ENCODE measurements at regions of chr19 and their contacts with region 1.

Region 1: DNA sequence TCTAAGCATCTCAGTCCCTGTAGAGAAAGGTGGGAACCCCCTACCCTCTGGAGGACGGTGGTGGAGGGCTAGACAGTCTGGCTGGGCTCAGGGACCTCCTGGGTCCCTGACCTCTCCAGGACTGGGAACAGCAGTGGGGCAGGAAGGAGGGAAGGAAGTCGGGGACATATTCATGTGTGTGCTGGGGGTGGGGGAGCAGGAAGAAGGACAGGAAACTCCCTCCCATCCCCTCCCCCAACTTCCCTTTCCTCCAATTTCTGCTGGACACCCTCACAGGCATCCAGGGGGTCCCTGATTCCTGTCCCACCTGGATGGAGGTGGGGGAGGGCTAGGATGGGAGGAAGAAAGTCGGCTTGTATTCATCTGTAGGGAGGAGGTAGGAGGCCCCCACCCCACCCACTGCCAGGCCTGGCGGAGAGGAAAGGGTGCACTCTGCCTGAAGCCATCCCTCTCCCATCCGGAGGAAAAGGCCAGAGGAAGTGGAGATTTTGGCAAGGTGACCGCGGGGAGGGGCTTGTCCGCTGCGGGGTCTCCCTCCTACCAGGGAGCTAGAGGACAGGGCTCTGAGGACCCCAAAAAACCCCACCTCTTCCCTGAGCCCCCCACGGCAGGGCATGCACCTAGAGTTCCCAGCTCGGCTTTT is 2.3 kb downstream of the NOVA2 start:
- DNase-seq: peak in 4 of 5 donors; percentile 29 to 66 (median 55)
- ATAC-seq: peak in 3 of 4 donors; percentile 49 to 66 (median 53)
- H3K4me3 ChIP-seq: peak overlapping the region in 11 of 12 donors; percentile 43 to 68 (median 58)
- H3K27ac ChIP-seq: peak overlapping the region in 11 of 12 donors; percentile 56 to 92 (median 85)
- H3K4me1 ChIP-seq: peaks cover 0 to 28% (median 6%) of the 10 kb centered on the region in 12 donors
- H3K27me3 ChIP-seq: peaks cover 8 to 57% (median 40%) of the 10 kb centered on the region in 9 donors
- CTCF ChIP-seq: no peak
- POLR2A ChIP-seq: no peak

Region 2: DNA sequence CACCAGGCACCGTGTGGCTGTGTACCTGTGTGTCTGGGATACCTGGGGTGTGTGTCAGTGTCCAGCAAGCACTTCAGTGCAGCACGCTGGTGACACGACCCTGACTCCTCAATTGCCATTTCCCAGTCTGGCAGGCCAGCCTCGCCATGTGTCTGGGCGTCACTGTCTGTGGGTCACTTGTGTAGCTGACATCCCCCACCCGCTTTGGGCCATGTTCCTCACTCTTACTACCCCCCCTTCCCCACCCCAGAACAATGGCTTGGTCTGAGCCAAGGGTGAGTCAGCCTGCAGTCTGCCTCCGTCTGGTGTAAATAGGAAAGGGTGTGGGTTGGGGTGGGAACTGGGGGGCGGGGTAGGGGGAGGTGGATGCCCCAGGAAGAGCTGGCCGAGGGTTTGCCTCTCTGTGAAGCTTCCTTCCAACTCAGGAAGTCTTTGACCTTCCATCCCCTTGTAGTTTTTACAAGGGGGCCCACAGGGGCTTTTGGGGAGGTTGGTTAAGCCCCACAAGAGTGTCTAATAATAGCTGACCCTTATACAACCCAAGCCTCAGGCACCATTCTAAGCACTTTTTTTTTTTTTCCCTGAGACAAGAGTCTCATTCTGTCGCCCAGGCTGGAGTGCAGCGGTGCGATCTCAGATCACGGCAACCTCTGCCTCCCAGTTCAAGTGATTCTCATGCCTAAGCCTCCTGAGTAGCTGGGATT is 15.3 kb before region 1 on chr19:
- intact Hi-C with region 1: loop called in 2 of 10 experiments (anchors 1 to 2 kb)
- DNase-seq: peak; percentile 76 to 87 (median 77)
- ATAC-seq: peak; percentile 81 to 92 (median 86)
- H3K4me3 ChIP-seq: no peak overlapping the region
- H3K27ac ChIP-seq: peak overlapping the region; percentile 41 to 86 (median 76)
- H3K4me1 ChIP-seq: peaks cover 0 to 61% (median 33%) of the 10 kb centered on the region in 12 donors
- H3K27me3 ChIP-seq: peaks cover 0 to 41% (median 12%) of the 10 kb centered on the region in 9 donors
- CTCF ChIP-seq: no peak
- POLR2A ChIP-seq: no peak